ENCODE measurements at regions of chr3 and their contacts with region 1.

Region 1: DNA sequence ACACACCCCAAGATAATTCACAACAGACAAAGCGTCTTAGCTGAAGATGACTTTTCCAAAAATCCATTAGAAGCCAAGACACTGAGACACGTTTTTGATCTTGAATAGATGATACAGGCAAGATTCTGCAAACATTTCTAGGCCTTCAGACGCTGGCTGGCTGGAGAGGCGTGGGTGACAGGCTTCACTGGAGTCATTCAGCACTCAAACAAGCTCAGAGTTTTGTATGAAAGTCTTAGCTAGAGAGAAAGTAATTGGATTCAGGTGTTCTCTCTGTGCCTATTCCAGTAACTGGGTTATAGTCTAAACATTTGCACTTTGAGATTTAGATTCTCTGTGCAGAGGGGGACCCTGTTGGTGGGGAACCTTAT is 147.7 kb upstream of the BHLHE40 start:
- DNase-seq: no peak
- ATAC-seq: peak; percentile 11
- H3K4me3 ChIP-seq: peak overlapping the region in 1 of 5 experiments; percentile 54
- H3K4me3 Mint-ChIP-seq: peak overlapping the region; percentile 75
- H3K27ac ChIP-seq: peak overlapping the region in 1 of 2 donors; percentile 64
- H3K27ac Mint-ChIP-seq: peak overlapping the region; percentile 80
- H3K4me1 ChIP-seq: peaks cover 36 to 46% of the 10 kb centered on the region in 2 donors
- H3K4me1 Mint-ChIP-seq: peaks cover 62% of the 10 kb centered on the region
- H3K27me3 ChIP-seq: no peaks in the 10 kb centered on the region
- H3K27me3 Mint-ChIP-seq: no peaks in the 10 kb centered on the region
- CTCF ChIP-seq: no peak

Region 2: GRCh38 chr3:4795905-4796304 is 35.7 kb before region 1 on chr3:
- CTCF ChIA-PET with region 1: no interaction called
- POLR2A ChIA-PET with region 1: no interaction called
- intact Hi-C with region 1: no loop called
- DNase-seq: no peak
- ATAC-seq: no peak
- H3K4me3 ChIP-seq: no peak overlapping the region
- H3K4me3 Mint-ChIP-seq: no peak overlapping the region
- H3K27ac ChIP-seq: no peak overlapping the region
- H3K27ac Mint-ChIP-seq: no peak overlapping the region
- H3K4me1 ChIP-seq: no peaks in the 10 kb centered on the region
- H3K4me1 Mint-ChIP-seq: no peaks in the 10 kb centered on the region
- H3K27me3 ChIP-seq: no peaks in the 10 kb centered on the region
- H3K27me3 Mint-ChIP-seq: no peaks in the 10 kb centered on the region
- CTCF ChIP-seq: no peak

Region 3: DNA sequence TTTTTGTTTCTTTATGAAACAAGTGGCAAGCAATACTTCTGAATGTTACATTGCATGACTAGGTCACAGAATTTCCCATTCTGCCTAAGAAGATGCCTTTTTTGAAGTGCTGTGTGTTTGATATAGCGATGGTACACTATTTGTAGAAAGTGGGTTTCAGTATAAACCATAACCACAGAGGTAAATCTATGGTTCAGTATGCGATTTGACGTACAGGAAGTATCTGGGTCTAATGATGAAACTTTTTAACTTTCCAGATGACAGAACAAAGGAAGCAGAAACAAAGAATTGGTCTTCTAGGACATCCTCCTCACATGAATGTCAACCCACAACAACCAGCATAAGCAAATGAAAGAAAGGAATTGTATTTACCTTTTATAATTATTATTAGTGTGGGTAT is 14.3 kb after region 1 on chr3:
- CTCF ChIA-PET with region 1: interaction called, 5 read pairs
- POLR2A ChIA-PET with region 1: no interaction called
- intact Hi-C with region 1: loop called (anchors 2 kb)
- DNase-seq: peak; percentile 58
- ATAC-seq: peak; percentile 73
- H3K4me3 ChIP-seq: no peak overlapping the region
- H3K4me3 Mint-ChIP-seq: peak overlapping the region; percentile 2
- H3K27ac ChIP-seq: no peak overlapping the region
- H3K27ac Mint-ChIP-seq: peak overlapping the region; percentile 33
- H3K4me1 ChIP-seq: peaks cover 16 to 22% of the 10 kb centered on the region in 2 donors
- H3K4me1 Mint-ChIP-seq: peaks cover 55% of the 10 kb centered on the region
- H3K27me3 ChIP-seq: no peaks in the 10 kb centered on the region
- H3K27me3 Mint-ChIP-seq: no peaks in the 10 kb centered on the region
- CTCF ChIP-seq: no peak

Region 4: GRCh38 chr3:5026331-5027218 is 195.0 kb after region 1 on chr3:
- CTCF ChIA-PET with region 1: interaction called, 3 read pairs
- POLR2A ChIA-PET with region 1: no interaction called
- intact Hi-C with region 1: loop called (anchors 1 kb)
- DNase-seq: peak; percentile 80
- ATAC-seq: peak; percentile 78
- H3K4me3 ChIP-seq: peak overlapping the region; percentile 21 to 64 (median 57)
- H3K4me3 Mint-ChIP-seq: peak overlapping the region; percentile 91
- H3K27ac ChIP-seq: peak overlapping the region in 1 of 2 donors; percentile 65
- H3K27ac Mint-ChIP-seq: peak overlapping the region; percentile 84
- H3K4me1 ChIP-seq: peaks cover 4 to 18% of the 10 kb centered on the region in 2 donors
- H3K4me1 Mint-ChIP-seq: peaks cover 41% of the 10 kb centered on the region
- H3K27me3 ChIP-seq: no peaks in the 10 kb centered on the region
- H3K27me3 Mint-ChIP-seq: no peaks in the 10 kb centered on the region
- CTCF ChIP-seq: peak; percentile 59